H1 (cell line): ENCODE measurements at regions of chr16 and their contacts with region 1.

Region 1: GRCh38 chr16:15553313-15554088 is 89.5 kb downstream of the MARF1 start:
- DNase-seq: no peak
- H3K4me3 ChIP-seq: no peak overlapping the region
- H3K27ac ChIP-seq: no peak overlapping the region
- H3K4me1 ChIP-seq: peaks cover 0 to 5% (median 4%) of the 10 kb centered on the region in 4 experiments; a peak in 3 of 7 replicates
- H3K27me3 ChIP-seq: no peaks in the 10 kb centered on the region
- CTCF ChIP-seq: no peak
- EP300 ChIP-seq: no peak
- POLR2A ChIP-seq: no peak
- RAD21 ChIP-seq: no peak

Region 2: DNA sequence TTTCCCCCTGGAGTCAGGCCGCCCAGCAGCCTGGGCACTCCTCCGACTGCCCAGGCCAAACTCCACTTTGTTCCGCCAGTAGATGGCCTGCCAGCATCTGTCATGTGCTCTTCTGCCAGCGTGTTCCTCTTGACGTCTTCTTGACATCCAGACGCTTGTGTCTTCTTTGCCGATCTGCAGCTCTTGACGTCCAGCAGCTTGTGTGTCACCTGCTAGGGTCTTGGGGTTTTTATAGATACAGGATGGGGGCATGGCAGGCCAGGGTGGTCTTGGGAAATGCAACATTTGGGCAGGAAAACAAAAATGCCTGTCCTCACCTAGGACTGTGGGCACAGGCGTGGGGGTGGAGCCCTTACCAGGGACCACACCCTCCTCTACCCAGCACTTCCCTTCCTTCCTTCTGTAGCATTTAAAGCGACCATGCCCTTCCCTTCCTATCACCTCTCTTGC is 30.4 kb before region 1 on chr16:
- CTCF ChIA-PET with region 1: interaction called, 19 read pairs
- POLR2A ChIA-PET with region 1: interaction called, 3 read pairs
- DNase-seq: no peak
- H3K4me3 ChIP-seq: no peak overlapping the region
- H3K27ac ChIP-seq: no peak overlapping the region
- H3K4me1 ChIP-seq: no peaks in the 10 kb centered on the region; a peak in 1 of 7 replicates
- H3K27me3 ChIP-seq: no peaks in the 10 kb centered on the region
- CTCF ChIP-seq: peak; percentile 35 to 41 (median 36)
- EP300 ChIP-seq: no peak
- POLR2A ChIP-seq: no peak
- RAD21 ChIP-seq: peak; percentile 30 to 62; a peak in 3 of 4 replicates

Region 3: GRCh38 chr16:15539197-15539596 is 14.3 kb before region 1 on chr16:
- CTCF ChIA-PET with region 1: interaction called, 42 read pairs
- POLR2A ChIA-PET with region 1: interaction called, 4 read pairs
- DNase-seq: peak in 1 of 2 experiments; percentile 85
- H3K4me3 ChIP-seq: no peak overlapping the region
- H3K27ac ChIP-seq: no peak overlapping the region
- H3K4me1 ChIP-seq: peaks cover 0 to 17% (median 9%) of the 10 kb centered on the region in 4 experiments; a peak in 5 of 7 replicates
- H3K27me3 ChIP-seq: no peaks in the 10 kb centered on the region
- CTCF ChIP-seq: no peak
- EP300 ChIP-seq: no peak
- POLR2A ChIP-seq: no peak
- RAD21 ChIP-seq: no peak

Region 4: DNA sequence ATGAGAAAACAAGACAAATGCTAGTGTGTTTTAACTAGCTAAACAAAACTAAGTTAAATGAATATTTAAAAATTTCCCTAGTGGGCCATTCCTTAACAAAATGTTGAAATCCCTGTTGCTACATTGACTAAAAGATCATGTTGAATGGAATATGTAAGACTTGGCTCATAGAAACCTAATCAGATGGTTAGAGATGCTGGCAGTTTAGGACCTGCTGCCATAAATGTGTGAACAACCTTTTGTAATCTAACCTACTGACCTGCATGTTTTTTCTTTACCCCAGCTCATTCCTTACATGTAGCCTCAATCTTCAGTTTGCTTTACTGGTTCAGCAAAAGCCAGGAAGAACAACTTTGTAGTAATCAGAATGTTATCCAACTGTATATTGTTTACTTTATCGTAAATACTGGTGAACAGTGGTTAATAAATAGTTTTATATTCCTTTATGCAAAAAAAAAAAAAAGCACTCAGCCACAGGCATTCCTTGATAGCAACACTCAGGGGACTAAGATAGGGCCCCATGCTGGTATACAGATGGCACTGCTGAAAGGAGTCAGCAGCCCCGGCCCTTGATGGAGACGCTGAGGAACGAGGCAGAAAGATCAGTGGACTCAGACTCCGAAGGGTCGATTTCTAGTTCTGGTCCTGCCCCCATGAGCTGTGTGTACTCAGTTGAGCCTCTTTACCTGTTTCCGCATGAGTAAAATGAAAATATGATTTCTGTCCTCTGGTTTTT is 11.3 kb after region 1 on chr16:
- CTCF ChIA-PET with region 1: interaction called, 17 read pairs
- POLR2A ChIA-PET with region 1: interaction called, 4 read pairs
- DNase-seq: no peak
- H3K4me3 ChIP-seq: no peak overlapping the region
- H3K27ac ChIP-seq: no peak overlapping the region
- H3K4me1 ChIP-seq: no peaks in the 10 kb centered on the region
- H3K27me3 ChIP-seq: no peaks in the 10 kb centered on the region
- CTCF ChIP-seq: no peak
- EP300 ChIP-seq: no peak
- POLR2A ChIP-seq: no peak
- RAD21 ChIP-seq: no peak

Region 5: DNA sequence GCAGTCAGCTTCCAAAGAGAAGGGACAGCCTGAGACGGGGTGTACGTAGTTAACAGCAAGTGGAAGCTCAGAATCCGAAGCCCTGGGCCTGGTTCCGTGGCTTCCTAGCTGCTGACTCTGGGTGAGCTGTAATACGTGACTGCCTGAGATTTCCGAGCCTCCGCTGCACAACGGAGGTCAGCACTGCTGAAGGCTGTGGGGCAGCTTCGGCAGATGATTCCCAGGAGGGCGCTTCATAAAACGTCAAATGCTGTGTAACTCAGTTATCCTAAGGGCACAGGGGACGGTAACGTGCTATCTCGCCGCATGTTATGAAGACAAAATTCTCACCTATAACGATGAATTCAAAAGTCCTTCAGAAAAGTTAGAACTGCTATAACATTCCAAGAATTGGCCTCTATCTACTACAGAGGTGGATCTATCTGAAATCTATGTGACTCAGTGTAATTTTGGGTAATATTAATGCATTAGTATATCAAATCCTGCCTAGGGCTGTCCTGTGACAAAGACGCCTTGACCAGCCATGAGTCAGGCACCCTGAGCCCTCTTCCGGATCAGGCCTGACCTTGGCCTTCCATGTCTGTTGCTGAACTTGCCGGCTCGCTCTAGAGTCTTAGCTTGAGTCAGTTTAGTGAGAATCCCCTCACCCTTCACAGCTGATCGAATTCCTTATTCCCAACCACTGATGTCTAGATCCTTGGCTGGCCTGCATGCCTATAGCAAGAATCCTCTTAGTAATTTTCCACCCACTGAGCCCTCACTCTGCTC is 46.0 kb after region 1 on chr16:
- CTCF ChIA-PET with region 1: no interaction called
- POLR2A ChIA-PET with region 1: no interaction called
- DNase-seq: no peak
- H3K4me3 ChIP-seq: no peak overlapping the region
- H3K27ac ChIP-seq: no peak overlapping the region
- H3K4me1 ChIP-seq: peaks cover 0 to 3% (median 2%) of the 10 kb centered on the region in 4 experiments; a peak in 3 of 7 replicates
- H3K27me3 ChIP-seq: no peaks in the 10 kb centered on the region
- CTCF ChIP-seq: no peak
- EP300 ChIP-seq: no peak
- POLR2A ChIP-seq: no peak
- RAD21 ChIP-seq: no peak